GM10248 (cell line): ENCODE measurements at regions of chr4 and their contacts with region 1.

Region 1: DNA sequence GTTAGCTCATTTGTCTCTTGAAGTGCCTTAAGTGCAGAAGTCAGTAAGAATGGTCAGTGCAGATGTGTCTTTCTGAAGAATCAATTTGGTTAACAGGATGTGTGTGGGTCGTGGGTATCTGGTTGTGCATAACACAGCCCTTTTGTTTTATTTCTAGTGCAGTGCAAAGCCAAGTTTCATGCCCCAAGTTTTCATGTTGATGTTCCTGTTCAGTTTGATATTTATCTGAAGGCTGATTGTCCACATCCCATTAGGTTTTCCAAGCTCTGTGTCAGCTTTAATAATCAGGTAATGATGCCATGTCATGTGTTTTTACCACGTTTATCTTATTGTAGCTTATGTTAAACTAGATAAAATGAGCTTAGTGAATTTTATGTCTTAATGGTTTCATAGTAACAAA is 27.4 kb downstream of the TRAPPC11 start:
- DNase-seq: no peak
- CTCF ChIP-seq: no peak

Region 2: GRCh38 chr4:183645326-183645725 is 41.1 kb before region 1 on chr4:
- CTCF ChIA-PET with region 1: no interaction called
- POLR2A ChIA-PET with region 1: no interaction called
- DNase-seq: no peak
- CTCF ChIP-seq: no peak

Region 3: DNA sequence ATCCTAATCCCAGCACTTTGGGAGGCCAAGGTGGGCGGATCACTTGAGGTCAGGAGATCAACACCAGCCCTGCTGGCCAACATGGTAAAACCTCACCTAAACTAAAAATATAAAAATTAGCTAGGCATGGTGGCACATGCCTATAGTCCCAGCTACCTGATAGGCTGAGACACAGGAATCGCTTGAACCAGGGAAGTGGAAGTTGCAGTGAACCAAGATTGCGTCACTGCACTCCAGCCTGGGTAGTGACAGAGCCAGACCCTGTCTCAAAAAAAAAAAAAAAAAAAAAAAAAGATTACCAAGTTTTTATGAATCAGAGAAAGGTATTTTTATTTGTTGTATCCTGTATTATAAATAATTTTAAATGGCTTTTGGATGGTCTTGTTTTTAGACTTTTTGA is 12.3 kb before region 1 on chr4:
- CTCF ChIA-PET with region 1: interaction called, 34 read pairs
- POLR2A ChIA-PET with region 1: no interaction called
- DNase-seq: no peak
- CTCF ChIP-seq: no peak